Activated B cell treated with CpG ODN at 0.5 μM for 24 hours (primary cell): ENCODE measurements at regions of chr10 and their contacts with region 1.

Region 1: GRCh38 chr10:120850911-120851865 is at the start of gene WDR11:
- DNase-seq: peak; percentile 75
- ATAC-seq: peak; percentile 92
- H3K4me3 Mint-ChIP-seq: peak within 1 kb of the TSS; percentile 99
- H3K27ac Mint-ChIP-seq: peak within 1 kb of the TSS; percentile 98
- H3K4me1 Mint-ChIP-seq: peaks cover 49% of the 10 kb centered on the region
- H3K27me3 Mint-ChIP-seq: no peaks in the 10 kb centered on the region
- CTCF ChIP-seq: no peak
- total RNA-seq, gene WDR11: 121 and 145 TPM in 2 replicates

Region 2: DNA sequence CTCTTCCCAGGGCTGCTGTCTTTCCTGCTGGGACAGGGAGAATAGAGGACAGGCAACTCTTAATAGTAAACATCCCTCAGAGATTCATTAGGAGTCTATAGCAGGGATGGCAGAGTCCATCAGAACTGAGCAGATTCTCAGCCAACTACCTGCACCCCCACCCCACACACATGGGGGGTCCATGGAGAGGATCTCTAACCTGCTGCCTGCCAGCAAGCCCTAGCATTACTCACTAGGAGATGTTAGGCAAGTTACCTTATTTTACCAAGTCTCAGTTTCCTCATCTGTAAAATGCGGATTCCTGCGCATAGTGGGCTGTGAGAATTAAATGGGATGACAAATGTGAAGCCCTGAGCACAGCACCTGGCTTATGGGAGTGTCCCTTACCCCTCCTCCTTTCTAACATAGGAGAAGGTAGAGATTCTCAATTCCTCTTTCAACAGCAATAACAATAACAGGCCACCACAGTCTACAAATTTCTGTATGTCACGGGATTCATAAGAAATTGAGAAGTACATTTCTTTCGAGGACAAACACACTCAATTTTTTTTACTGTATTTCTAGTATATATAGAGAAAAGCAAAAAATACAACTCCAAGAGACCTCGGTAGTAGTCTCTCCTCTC is 23.8 kb before region 1 on chr10:
- CTCF ChIA-PET with region 1: interaction called, 4 read pairs
- POLR2A ChIA-PET with region 1: interaction called, 12 read pairs
- intact Hi-C with region 1: loop called (anchors 2 kb)
- DNase-seq: no peak
- ATAC-seq: peak; percentile 85
- H3K4me3 Mint-ChIP-seq: no peak overlapping the region
- H3K27ac Mint-ChIP-seq: peak overlapping the region; percentile 38
- H3K4me1 Mint-ChIP-seq: peaks cover 36% of the 10 kb centered on the region
- H3K27me3 Mint-ChIP-seq: no peaks in the 10 kb centered on the region
- CTCF ChIP-seq: no peak

Region 3: GRCh38 chr10:120873734-120874133 is 22.5 kb after region 1 on chr10:
- CTCF ChIA-PET with region 1: no interaction called
- POLR2A ChIA-PET with region 1: no interaction called
- intact Hi-C with region 1: loop called (anchors 2 kb)
- DNase-seq: no peak
- ATAC-seq: no peak
- H3K4me3 Mint-ChIP-seq: no peak overlapping the region
- H3K27ac Mint-ChIP-seq: no peak overlapping the region
- H3K4me1 Mint-ChIP-seq: no peaks in the 10 kb centered on the region
- H3K27me3 Mint-ChIP-seq: no peaks in the 10 kb centered on the region
- CTCF ChIP-seq: no peak

Region 4: GRCh38 chr10:121927841-121928527 is 1076.8 kb after region 1 on chr10 and contains the start of gene ATE1:
- CTCF ChIA-PET with region 1: no interaction called
- POLR2A ChIA-PET with region 1: interaction called, 12 read pairs
- intact Hi-C with region 1: loop called (anchors 1 kb)
- DNase-seq: peak; percentile 79
- ATAC-seq: peak; percentile 91
- H3K4me3 Mint-ChIP-seq: peak within 1 kb of the TSS; percentile 94
- H3K27ac Mint-ChIP-seq: peak within 1 kb of the TSS; percentile 91
- H3K4me1 Mint-ChIP-seq: peaks cover 19% of the 10 kb centered on the region
- H3K27me3 Mint-ChIP-seq: no peaks in the 10 kb centered on the region
- CTCF ChIP-seq: no peak
- total RNA-seq, gene ATE1: 26.0 and 31.0 TPM in 2 replicates

Region 5: DNA sequence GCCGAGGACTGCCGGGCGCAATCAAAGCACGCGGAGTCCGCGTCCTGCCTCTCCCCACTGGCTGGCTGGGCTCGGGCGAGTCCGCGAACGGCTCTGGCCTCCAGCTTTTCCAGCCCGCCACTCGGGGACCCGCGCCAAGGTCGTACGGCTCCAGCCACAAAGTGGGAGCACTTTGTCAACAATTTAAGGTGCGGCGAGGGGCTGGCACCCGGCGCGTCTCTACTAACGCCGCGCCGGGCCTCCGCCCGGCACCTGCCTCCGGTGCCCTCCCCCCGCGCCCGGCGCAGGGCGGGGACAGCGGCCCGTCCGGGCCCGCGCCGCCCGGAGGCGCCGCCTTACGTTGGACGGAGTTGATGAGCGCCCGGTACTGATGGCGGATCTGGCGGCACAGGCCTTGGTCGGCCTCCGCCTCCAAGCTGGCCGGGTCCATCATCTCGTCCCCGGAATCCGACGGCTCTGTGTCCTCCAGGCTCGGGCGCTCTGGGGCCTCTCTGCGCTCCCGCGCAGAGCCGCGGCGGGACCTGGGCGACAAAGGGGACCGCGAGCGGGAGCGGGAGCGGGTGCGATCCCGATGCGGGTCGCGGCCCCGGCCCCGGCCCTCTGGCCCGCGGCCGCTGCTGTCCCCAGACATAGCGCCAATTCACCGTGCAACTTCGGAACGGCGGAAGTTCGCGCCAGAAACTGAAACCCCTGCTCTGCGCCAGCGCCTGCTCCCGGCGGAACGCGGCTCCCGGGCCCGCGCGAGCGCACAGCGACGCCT is 1123.5 kb after region 1 on chr10 and contains the start of gene NSMCE4A:
- CTCF ChIA-PET with region 1: no interaction called
- POLR2A ChIA-PET with region 1: no interaction called
- intact Hi-C with region 1: loop called (anchors 1 kb)
- DNase-seq: peak; percentile 71
- ATAC-seq: peak; percentile 83
- H3K4me3 Mint-ChIP-seq: peak within 1 kb of the TSS; percentile 83
- H3K27ac Mint-ChIP-seq: peak within 1 kb of the TSS; percentile 18
- H3K4me1 Mint-ChIP-seq: peaks cover 26% of the 10 kb centered on the region
- H3K27me3 Mint-ChIP-seq: no peaks in the 10 kb centered on the region
- CTCF ChIP-seq: no peak
- total RNA-seq, gene NSMCE4A: 70.3 and 78.0 TPM in 2 replicates